ENCODE measurements at regions of chr17 and their contacts with region 1.

Region 1: DNA sequence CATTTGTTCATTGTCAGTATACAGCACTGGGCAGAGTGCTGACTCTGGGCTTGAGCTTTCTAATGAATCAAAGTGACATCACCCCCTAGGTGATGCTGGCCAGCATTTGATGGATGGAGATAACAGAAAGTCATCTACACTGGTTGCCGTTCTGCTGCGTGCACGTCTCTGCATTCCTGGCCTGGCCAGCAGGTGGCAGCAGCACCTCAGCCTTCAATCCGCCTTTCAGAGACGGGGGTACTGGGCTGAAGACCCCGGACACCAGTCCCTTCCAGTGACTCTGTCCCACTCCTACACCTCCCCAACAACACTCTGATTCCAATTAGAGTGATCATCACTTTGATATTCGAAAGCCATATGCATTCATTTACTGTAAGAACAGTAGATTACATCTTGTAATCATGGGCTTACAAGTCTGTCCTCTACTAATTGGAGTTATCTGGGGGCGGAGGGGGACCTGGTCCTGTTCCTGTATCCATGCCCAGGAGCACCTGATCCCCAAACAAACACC is 6.0 kb downstream of the CPSF4L start:
- H3K4me3 Mint-ChIP-seq: no peak overlapping the region
- H3K27ac Mint-ChIP-seq: no peak overlapping the region
- H3K4me1 Mint-ChIP-seq: peaks cover 5% of the 10 kb centered on the region
- H3K27me3 Mint-ChIP-seq: no peaks in the 10 kb centered on the region

Region 2: DNA sequence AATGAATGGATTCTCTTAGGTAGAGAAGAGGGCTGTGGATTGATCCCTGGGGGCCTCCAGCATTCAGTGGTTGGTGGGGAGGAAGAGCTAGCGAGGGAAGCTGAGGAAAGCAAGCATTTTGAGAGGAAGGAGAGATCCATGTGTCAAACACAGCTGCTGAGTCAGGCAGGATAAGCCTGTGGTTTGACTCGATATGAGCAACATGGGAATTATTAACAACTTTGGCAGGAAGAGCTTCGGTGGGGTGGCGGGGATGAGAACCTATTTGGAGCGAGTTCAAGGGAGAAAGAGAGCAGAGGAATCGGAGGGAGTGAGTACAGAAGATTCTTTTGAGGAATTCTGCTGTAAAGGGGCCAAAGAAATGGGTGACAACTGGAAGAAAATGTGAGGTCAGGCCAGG is 115.6 kb after region 1 on chr17:
- intact Hi-C with region 1: loop called (anchors 1 kb)
- H3K4me3 Mint-ChIP-seq: no peak overlapping the region
- H3K27ac Mint-ChIP-seq: no peak overlapping the region
- H3K4me1 Mint-ChIP-seq: peaks cover 12% of the 10 kb centered on the region
- H3K27me3 Mint-ChIP-seq: peaks cover 8% of the 10 kb centered on the region

Region 3: DNA sequence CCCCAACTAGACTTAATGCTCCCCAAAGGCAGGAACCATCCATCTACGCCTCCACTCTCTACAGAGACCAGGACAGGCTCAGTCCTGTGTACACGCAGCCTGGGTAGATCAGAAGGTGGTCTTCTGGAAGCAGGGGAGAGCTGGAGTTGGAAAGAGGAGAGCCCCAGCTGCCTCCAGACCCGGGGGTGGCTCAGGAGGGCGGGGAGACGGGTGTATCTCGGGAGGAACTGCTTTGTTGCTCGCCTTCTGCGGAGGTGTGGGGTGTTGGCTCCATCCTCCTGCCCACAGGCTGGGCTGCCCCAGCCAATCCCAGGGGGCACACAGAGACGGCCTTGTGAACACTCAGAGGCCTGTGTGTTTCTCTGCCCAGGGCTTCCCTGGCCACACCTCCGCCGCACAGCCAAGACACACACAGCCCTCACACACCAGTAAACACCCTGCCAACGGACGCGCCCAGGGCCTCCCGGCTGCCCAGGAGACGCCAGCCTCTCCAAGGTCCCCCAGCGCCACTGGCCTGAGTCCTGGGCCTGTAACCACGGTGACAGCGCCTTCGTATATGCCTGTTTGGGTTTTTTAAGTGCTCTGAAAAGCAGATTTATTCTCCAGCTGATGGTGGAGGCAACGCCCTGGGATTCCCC is 199.4 kb after region 1 on chr17:
- intact Hi-C with region 1: no loop called
- H3K4me3 Mint-ChIP-seq: no peak overlapping the region
- H3K27ac Mint-ChIP-seq: no peak overlapping the region
- H3K4me1 Mint-ChIP-seq: no peaks in the 10 kb centered on the region
- H3K27me3 Mint-ChIP-seq: no peaks in the 10 kb centered on the region

Measured in dendritic cell treated with granulocyte-macrophage colony-stimulating factor and Interleukin-4, amounts not matched to agents 40 ng/mL and 50 ng/mL, for 4 days (primary cell).